GM13976 (cell line): ENCODE measurements at regions of chr7 and their contacts with region 1.

Region 1: DNA sequence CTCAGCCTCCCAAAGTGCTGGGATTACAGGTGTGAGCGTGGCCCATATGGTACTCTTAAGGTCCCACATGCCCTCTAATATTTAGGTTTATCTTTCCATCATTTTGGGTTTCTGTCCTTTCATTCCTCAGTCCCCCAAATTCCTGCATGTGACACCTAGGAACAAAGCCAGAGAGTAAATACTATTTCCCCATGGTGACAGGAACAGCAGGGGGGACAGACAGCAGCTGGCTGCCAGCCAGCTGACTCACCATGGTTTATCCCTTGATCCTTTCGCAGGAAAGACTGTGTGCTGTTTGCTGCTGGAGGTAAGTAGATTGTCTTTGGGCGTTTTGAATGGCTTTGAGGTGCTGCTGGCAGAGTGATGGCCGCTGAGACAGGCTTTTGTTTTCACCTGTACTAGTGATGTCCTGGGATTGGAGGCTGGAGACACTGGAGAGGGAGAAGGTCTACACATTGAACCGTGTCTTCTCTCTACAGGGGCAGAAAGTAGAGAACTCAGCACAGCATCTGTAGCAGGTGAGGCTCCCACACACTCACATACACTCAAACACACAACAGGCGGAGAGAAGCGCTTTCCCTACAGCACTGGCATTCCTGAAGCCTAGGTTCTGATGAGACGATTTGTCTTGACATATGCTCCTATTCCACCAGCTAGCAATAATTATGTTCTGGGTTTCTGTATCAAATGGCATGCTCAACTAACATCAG is 83.7 kb upstream of the EFCAB10 start:
- DNase-seq: no peak
- CTCF ChIP-seq: no peak

Region 2: GRCh38 chr7:106166655-106167342 is 501.8 kb after region 1 on chr7:
- in situ Hi-C with region 1: loop called (anchors 10 kb)
- DNase-seq: peak; percentile 60
- CTCF ChIP-seq: peak; percentile 62